ENCODE measurements at regions of chr17 and their contacts with region 1.

Region 1: DNA sequence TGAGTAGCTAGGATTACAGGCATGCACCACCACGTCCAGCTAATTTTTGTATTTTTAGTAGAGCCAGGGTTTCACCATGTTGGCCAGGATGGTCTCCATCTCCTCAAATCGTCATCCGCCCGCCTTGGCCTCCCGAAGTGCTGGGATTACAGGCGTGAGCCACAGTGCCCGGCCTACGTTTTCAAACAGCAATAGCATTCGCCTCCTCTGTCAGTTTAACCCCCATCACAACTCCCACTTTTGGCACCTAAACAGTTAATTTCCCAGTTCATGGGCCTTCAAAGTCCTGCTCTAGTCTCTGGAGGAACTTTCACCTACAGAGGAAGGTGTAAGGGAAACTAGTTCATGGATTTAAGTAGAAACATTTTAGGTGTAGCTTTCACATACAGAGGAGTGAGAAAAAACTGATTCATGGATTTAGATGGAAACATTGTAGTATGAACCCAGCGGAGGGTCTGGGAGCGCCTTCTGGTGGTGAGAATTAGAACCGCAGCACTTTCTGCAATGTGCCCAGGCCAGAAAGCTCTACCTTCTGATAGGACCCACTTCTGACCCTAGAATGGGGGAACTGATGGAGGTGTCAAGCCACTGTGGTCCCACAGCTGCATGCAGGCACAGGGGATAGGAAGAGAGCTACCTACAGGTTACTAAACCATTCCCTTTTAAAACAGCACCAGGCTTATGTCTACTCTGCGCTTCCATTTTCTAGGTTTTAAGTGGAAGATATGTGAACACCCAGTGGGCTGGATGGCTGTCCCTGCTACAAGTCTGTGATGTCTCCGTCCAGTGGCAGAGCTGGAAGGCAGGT is 12.0 kb upstream of the MEOX1 start:
- DNase-seq: peak; percentile 53 to 79 (median 72)
- ATAC-seq: peak; percentile 76
- H3K4me3 ChIP-seq: no peak overlapping the region
- H3K4me3 Mint-ChIP-seq: no peak overlapping the region
- H3K27ac ChIP-seq: no peak overlapping the region
- H3K27ac Mint-ChIP-seq: no peak overlapping the region
- H3K4me1 ChIP-seq: peaks cover 9% of the 10 kb centered on the region
- H3K4me1 Mint-ChIP-seq: peaks cover 11% of the 10 kb centered on the region
- H3K27me3 ChIP-seq: no peaks in the 10 kb centered on the region
- H3K27me3 Mint-ChIP-seq: peaks cover 2% of the 10 kb centered on the region
- CTCF ChIP-seq: peak; percentile 86

Region 2: GRCh38 chr17:43584666-43585102 is 89.0 kb before region 1 on chr17:
- CTCF ChIA-PET with region 1: interaction called, 17 read pairs
- POLR2A ChIA-PET with region 1: interaction called, 5 read pairs
- intact Hi-C with region 1: no loop called
- DNase-seq: no peak
- ATAC-seq: no peak
- H3K4me3 ChIP-seq: no peak overlapping the region
- H3K4me3 Mint-ChIP-seq: no peak overlapping the region
- H3K27ac ChIP-seq: no peak overlapping the region
- H3K27ac Mint-ChIP-seq: no peak overlapping the region
- H3K4me1 ChIP-seq: no peaks in the 10 kb centered on the region
- H3K4me1 Mint-ChIP-seq: peaks cover under 1% of the 10 kb centered on the region
- H3K27me3 ChIP-seq: no peaks in the 10 kb centered on the region
- H3K27me3 Mint-ChIP-seq: peaks cover 5% of the 10 kb centered on the region
- CTCF ChIP-seq: no peak

Region 3: DNA sequence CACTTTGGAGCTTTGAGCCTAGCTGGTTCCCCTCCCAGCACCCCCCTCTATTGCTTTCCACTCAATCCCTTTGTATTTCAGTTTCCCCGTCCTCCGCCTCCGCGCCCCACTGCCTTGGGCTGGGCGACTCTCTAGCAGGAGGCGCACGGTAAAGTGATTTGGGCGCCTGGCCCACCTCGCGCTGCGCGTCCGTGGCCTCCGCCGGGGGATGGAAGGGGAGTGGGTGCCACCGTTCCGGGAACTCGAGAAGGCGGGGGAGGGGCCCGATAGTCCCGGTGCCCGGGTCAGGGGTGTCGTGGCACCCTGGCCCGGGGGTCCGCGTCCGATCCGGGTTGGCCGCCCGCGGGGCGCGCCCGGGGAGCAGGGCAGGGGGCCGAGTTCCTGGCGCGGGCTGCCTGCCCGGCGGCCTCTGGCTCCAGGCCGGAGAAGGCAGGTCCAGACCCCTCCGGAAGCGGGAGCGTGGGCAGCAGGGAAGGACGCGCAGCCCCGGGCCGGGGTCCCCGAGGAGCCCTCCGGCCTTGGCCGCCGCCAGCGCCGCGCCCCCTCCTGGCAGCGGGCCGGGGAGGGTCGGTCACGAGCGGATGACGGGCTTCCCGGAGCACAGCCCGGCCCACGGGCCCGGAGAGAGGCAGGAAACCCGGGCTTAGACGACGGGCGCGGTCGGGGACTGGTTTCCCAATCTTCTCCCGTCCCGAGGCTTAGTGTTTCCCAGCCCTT is 27.8 kb before region 1 on chr17:
- CTCF ChIA-PET with region 1: interaction called, 16 read pairs
- POLR2A ChIA-PET with region 1: no interaction called
- intact Hi-C with region 1: no loop called
- DNase-seq: peak in 5 of 9 experiments; percentile 6 to 33 (median 19)
- ATAC-seq: peak; percentile 51
- H3K4me3 ChIP-seq: peak overlapping the region in 1 of 2 experiments; percentile 30
- H3K4me3 Mint-ChIP-seq: peak overlapping the region; percentile 55
- H3K27ac ChIP-seq: no peak overlapping the region
- H3K27ac Mint-ChIP-seq: peak overlapping the region; percentile 32
- H3K4me1 ChIP-seq: peaks cover 1% of the 10 kb centered on the region
- H3K4me1 Mint-ChIP-seq: peaks cover 18% of the 10 kb centered on the region
- H3K27me3 ChIP-seq: no peaks in the 10 kb centered on the region
- H3K27me3 Mint-ChIP-seq: peaks cover 16% of the 10 kb centered on the region
- CTCF ChIP-seq: no peak

Region 4: GRCh38 chr17:43658900-43659299 is 14.8 kb before region 1 on chr17:
- CTCF ChIA-PET with region 1: interaction called, 16 read pairs
- POLR2A ChIA-PET with region 1: interaction called, 3 read pairs
- intact Hi-C with region 1: no loop called
- DNase-seq: no peak
- ATAC-seq: no peak
- H3K4me3 ChIP-seq: no peak overlapping the region
- H3K4me3 Mint-ChIP-seq: no peak overlapping the region
- H3K27ac ChIP-seq: no peak overlapping the region
- H3K27ac Mint-ChIP-seq: no peak overlapping the region
- H3K4me1 ChIP-seq: peaks cover 19% of the 10 kb centered on the region
- H3K4me1 Mint-ChIP-seq: peaks cover 32% of the 10 kb centered on the region
- H3K27me3 ChIP-seq: no peaks in the 10 kb centered on the region
- H3K27me3 Mint-ChIP-seq: peaks cover 3% of the 10 kb centered on the region
- CTCF ChIP-seq: no peak

Measured in CD8-positive, alpha-beta T cell (primary cell).